ENCODE measurements at regions of chr19 and their contacts with region 1.

Region 1: GRCh38 chr19:30696514-30696913 is 324.3 kb downstream of the ZNF536 start:
- DNase-seq: peak; percentile 52
- H3K4me3 ChIP-seq: no peak overlapping the region; a peak in 1 of 4 replicates
- H3K27ac ChIP-seq: no peak overlapping the region
- H3K4me1 ChIP-seq: peaks cover 5 to 41% of the 10 kb centered on the region in 2 experiments; a peak in 3 of 4 replicates
- H3K27me3 ChIP-seq: no peaks in the 10 kb centered on the region; the same call in 1 of the 2 replicates
- CTCF ChIP-seq: no peak
- EP300 ChIP-seq: no peak
- RAD21 ChIP-seq: peak; percentile 47

Region 2: GRCh38 chr19:30669329-30670010 is 27.0 kb before region 1 on chr19:
- CTCF ChIA-PET with region 1: interaction called, 18 read pairs
- POLR2A ChIA-PET with region 1: no interaction called
- DNase-seq: peak; percentile 83
- H3K4me3 ChIP-seq: no peak overlapping the region; a peak in 2 of 4 replicates
- H3K27ac ChIP-seq: no peak overlapping the region
- H3K4me1 ChIP-seq: peaks cover 0 to 5% of the 10 kb centered on the region in 2 experiments; a peak in 1 of 4 replicates
- H3K27me3 ChIP-seq: no peaks in the 10 kb centered on the region
- CTCF ChIP-seq: peak; percentile 84
- EP300 ChIP-seq: no peak
- RAD21 ChIP-seq: peak; percentile 83

Region 3: DNA sequence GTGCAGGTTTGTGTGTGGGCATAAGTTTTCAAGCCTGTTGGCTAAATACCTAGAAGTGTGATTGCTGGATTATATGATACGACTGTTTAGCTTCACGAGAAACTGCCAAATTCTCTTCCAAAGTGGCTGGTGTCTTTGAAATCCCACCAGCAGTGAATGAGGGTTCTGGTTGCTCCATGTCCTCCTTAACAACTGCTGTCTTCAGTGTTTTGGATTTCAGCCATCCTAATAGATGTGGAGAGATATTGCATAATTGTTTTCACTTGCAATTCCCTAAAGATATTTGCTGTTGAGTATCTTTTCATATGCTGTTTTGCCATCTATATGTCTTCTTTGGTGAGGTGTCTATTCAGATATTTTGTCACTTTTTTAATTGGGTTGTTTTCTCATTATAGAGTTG is 66.1 kb after region 1 on chr19:
- CTCF ChIA-PET with region 1: no interaction called
- POLR2A ChIA-PET with region 1: no interaction called
- DNase-seq: no peak
- H3K4me3 ChIP-seq: no peak overlapping the region
- H3K27ac ChIP-seq: no peak overlapping the region
- H3K4me1 ChIP-seq: peaks cover 0 to 5% of the 10 kb centered on the region in 2 experiments; a peak in 1 of 4 replicates
- H3K27me3 ChIP-seq: no peaks in the 10 kb centered on the region
- CTCF ChIP-seq: no peak
- EP300 ChIP-seq: no peak
- RAD21 ChIP-seq: no peak

Measured in SK-N-SH (cell line).